Left cardiac atrium (tissue), 4 donors: ENCODE measurements at regions of chr10 and their contacts with region 1.

Region 1: DNA sequence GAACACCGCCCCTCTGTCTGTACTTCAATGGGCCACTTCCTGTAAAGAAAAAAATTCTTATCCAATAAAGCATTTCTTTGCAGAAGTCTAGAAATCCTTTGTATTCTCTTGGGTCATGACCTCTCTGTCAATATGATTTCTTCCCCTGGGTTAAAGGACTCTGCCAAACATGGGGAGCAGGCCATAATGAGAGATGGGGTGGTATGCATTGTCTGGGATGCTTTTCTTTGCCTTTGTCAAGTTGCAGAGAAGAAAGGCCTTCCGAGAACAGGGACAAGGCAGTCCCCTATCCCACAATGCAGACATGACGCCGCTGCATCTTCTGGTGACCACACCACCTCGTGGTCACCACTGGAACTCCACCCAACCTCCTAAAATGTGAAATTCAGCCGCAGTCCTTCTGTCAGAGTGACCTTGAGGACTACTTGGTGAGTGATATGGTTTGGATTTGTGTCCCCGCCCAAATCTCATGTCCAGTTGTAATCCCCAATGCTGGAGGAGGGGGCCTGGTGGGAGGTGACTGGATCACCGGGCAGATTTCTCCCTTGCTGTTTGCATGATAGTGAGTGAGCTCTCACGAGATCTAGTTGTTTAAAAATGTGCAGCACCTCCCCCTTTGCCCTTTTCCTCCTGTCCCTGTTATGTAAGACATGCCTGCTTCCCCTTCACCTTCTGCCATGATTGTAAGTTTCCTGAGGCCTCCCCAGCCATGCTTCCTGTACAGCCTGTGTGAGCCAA is 15.2 kb upstream of the FRMPD2 start:
- DNase-seq: peak; percentile 55
- ATAC-seq: peak; percentile 77 to 78

Region 2: GRCh38 chr10:47195274-47195885 is 1094.3 kb before region 1 on chr10:
- intact Hi-C with region 1: no loop called
- DNase-seq: no peak
- ATAC-seq: no peak

Region 3: GRCh38 chr10:48215488-48216204 is 74.0 kb before region 1 on chr10:
- intact Hi-C with region 1: loop called in 1 of 2 experiments (anchors 5 kb)
- DNase-seq: peak; percentile 25
- ATAC-seq: peak; percentile 34 to 44

Region 4: GRCh38 chr10:48336978-48337599 is 47.4 kb after region 1 on chr10:
- intact Hi-C with region 1: no loop called
- DNase-seq: no peak
- ATAC-seq: no peak

Region 5: DNA sequence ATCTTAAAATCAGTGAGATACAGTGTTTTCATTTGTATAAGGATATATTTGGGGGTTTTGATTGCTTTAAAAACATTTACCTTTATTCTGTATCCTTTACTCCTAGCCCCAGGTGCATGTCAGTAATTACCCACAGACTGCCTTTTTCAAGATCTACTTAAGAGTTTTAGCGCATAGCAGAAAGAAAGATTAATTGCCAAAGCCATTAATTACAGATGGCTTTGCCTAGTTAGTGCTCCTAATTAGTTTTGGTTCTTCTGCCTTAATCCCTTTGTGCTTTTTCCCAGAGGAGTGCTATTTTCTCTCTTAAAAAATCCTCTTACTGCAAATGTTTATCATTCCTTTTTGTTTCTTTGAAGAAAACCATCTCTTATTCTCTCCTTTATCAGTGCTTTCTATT is 139.6 kb after region 1 on chr10:
- intact Hi-C with region 1: no loop called
- DNase-seq: no peak
- ATAC-seq: no peak